AG04450 (cell line): ENCODE measurements at regions of chr10 and their contacts with region 1.

Region 1: DNA sequence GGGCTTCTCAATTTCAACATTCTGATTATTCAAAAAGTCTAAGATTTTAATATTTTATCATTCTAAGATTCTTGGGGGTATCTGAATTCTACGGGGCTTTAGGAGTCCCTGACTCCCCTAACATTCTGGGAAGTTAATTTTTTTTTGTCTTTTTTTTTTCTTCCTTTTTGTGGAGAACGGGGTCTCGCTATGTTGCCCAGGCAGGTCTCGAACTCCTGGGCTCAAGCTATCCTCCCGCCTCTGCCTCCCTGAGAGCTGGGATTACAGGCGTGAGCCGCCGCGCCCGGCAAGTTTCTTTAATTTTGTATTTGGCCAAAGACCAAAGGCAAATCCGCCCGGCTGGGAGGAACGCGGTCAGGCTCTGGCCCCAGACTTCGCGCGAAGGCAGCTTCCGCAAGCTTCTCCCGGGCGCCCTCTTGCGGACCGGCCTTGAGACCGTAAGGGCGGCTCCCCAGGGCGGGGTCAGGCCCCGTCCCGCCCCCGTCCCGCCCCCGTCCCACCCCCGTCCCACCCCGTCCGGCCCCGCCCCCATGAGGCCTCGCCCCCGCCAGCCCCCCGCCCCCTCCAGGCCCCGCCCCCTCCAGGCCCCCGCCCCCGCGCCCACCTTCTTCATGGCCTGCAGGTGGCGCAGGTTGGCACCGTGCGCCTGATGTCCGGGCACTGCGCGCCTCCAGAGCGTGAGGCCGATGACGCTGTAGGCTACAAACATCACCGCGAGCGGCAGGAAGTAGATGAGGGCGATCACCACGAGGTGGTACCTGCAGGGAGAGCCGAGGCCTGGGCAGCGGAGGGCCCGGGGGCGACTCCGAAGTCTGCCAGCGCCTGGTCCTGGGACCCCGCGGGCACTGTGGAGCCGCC is 8.2 kb downstream of the TACR2 start:
- DNase-seq: peak; percentile 85
- H3K4me3 ChIP-seq: peak overlapping the region; percentile 53
- H3K27ac ChIP-seq: peak overlapping the region; percentile 31
- H3K27me3 ChIP-seq: no peaks in the 10 kb centered on the region
- CTCF ChIP-seq: peak; percentile 67

Region 2: DNA sequence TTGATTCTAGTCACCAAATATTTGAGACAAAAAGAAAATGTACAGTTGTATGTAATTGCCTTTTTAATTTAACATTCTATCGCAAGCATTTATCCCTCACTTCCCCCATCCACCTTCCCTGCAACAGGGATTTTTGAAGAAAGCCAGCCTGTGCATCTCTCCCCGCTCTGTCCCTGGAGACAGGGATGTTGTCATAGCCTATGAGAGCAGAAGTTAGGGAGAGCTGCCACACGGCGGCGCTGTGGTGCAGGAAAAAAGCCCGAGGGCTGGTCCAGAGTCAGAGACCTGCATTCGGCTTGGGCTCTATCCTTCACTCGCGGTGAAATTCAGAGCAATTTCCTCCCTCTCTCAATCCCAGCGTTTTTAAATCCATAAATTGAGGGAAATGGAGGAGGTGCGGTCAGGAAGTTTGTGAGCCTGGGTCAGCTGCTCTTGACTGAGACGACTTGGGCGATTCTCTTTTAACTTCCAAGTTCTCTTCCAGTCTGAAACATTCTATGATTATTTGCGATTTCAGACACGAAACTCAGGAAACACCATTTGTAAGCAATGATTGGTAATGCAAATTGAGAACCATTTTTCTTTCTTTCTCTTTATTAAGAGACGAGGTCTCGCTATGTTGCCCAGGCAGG is 170.9 kb before region 1 on chr10:
- CTCF ChIA-PET with region 1: interaction called, 12 read pairs
- POLR2A ChIA-PET with region 1: no interaction called
- DNase-seq: peak; percentile 36
- H3K4me3 ChIP-seq: no peak overlapping the region
- H3K27ac ChIP-seq: no peak overlapping the region
- H3K27me3 ChIP-seq: peaks cover 3% of the 10 kb centered on the region
- CTCF ChIP-seq: peak; percentile 94

Region 3: GRCh38 chr10:69397972-69398371 is 10.6 kb before region 1 on chr10:
- CTCF ChIA-PET with region 1: interaction called, 12 read pairs
- POLR2A ChIA-PET with region 1: no interaction called
- DNase-seq: no peak
- H3K4me3 ChIP-seq: no peak overlapping the region
- H3K27ac ChIP-seq: no peak overlapping the region
- H3K27me3 ChIP-seq: no peaks in the 10 kb centered on the region
- CTCF ChIP-seq: no peak

Region 4: DNA sequence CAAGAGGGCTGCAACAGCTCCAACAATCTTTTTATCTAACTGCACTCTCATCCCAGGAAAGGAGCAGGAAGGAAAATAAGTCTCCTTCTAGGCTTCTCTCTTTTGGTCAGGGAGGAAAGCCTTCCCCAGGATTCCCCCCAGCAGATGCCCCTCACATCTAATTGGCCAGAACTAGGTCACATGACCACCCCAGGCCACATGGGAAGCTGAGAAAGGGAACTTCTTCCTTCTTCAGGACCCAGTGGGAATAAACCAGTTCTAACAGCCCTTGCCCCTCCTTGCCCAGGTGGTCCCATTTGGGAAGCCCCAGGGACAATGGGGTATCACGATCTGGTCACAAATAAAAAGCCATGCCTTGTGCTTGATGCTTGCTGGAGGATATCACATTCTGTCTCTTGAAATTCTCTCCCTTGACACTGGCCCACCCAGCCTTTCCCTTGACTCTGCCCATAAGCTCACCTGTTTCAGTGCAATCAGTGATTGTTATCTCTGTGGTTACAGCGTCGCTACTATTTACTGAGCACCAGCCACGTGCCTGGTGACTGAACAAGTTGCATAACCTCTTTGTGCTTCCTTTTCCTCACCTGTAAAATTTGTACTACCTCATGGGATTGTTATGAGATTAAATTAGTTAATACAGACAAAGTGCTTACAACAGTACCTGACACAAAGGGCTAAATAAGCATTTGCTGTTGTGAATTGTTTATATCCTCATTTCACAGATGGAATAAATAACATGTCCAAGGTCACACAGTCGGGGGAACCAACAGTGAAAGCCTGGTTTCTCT is 17.2 kb after region 1 on chr10:
- CTCF ChIA-PET with region 1: interaction called, 17 read pairs
- POLR2A ChIA-PET with region 1: interaction called, 3 read pairs
- DNase-seq: no peak
- H3K4me3 ChIP-seq: no peak overlapping the region
- H3K27ac ChIP-seq: no peak overlapping the region
- H3K27me3 ChIP-seq: peaks cover 37% of the 10 kb centered on the region
- CTCF ChIP-seq: no peak

Region 5: DNA sequence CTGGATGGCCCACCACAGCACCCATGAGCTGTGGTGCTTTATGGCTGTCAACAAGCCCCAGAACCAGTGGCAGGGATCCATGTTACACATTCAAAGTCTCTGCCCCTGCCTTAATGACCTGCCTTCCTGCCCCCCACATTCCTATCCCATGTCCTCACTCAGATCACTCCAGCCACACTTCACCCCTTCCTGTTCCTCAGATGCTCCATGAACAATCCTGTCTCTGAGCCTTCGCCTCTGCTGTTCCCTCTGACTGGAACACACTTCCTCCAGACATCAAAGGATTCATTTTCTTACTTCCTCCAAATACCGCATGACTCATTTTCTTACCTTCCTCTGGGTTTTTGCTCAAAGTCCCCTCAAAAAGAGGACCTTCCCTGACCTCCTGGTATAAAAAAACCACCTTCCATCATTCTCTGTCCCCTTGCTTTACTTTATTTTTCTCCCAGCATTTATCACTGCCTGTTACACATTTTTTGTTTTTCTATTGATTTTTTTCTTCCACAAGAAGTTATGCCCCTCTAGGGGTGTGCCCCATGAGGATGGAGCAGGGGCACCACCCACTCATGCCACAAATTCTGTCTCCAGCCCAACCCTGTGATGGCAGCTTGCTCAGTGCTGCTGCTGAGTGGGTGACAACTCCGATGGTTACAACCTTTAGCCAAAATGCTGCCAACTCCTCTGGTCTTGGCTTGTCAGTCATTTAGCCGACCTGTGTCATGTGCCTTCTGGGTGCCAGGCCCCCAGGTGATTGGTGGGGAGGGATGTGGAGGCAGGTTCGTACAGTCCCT is 411.4 kb after region 1 on chr10:
- CTCF ChIA-PET with region 1: no interaction called
- POLR2A ChIA-PET with region 1: no interaction called
- DNase-seq: no peak
- H3K4me3 ChIP-seq: no peak overlapping the region
- H3K27ac ChIP-seq: no peak overlapping the region
- H3K27me3 ChIP-seq: no peaks in the 10 kb centered on the region
- CTCF ChIP-seq: no peak